Calu3 (cell line): ENCODE measurements at regions of chr6 and their contacts with region 1.

Region 1: GRCh38 chr6:137094411-137095008 is 49.7 kb upstream of the IL20RA start:
- DNase-seq: peak; percentile 44
- H3K4me3 Mint-ChIP-seq: no peak overlapping the region
- H3K27ac Mint-ChIP-seq: no peak overlapping the region
- H3K4me1 Mint-ChIP-seq: no peaks in the 10 kb centered on the region
- H3K27me3 Mint-ChIP-seq: no peaks in the 10 kb centered on the region
- CTCF ChIP-seq: peak; percentile 31

Region 2: GRCh38 chr6:137165375-137166246 is 71.1 kb after region 1 on chr6:
- CTCF ChIA-PET with region 1: interaction called, 10 read pairs
- intact Hi-C with region 1: no loop called
- DNase-seq: peak; percentile 9
- H3K4me3 Mint-ChIP-seq: no peak overlapping the region
- H3K27ac Mint-ChIP-seq: no peak overlapping the region
- H3K4me1 Mint-ChIP-seq: peaks cover 9% of the 10 kb centered on the region
- H3K27me3 Mint-ChIP-seq: peaks cover 13% of the 10 kb centered on the region
- CTCF ChIP-seq: peak; percentile 10

Region 3: DNA sequence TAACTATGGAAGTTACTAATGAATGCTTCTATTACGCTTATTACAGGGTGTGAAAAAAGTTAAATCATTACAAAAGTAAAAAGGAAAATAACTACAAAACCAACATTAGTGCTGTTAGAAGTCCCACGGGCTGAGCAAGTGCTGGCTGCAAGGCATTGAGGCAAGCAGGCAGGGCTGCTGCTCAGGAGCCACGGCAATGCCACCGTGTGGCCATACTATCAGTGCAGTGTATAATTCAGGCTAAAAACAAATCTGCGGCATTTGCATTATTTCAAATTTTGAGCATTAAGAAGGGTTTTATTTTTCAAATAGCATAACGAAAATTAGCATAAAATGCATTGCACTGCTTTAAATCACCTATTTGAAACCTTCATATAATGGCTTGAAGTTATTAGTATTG is 107.6 kb after region 1 on chr6:
- CTCF ChIA-PET with region 1: no interaction called
- intact Hi-C with region 1: no loop called
- DNase-seq: no peak
- H3K4me3 Mint-ChIP-seq: no peak overlapping the region
- H3K27ac Mint-ChIP-seq: no peak overlapping the region
- H3K4me1 Mint-ChIP-seq: no peaks in the 10 kb centered on the region
- H3K27me3 Mint-ChIP-seq: no peaks in the 10 kb centered on the region
- CTCF ChIP-seq: no peak

Region 4: GRCh38 chr6:137313928-137314855 is 219.7 kb after region 1 on chr6:
- CTCF ChIA-PET with region 1: interaction called, 6 read pairs
- intact Hi-C with region 1: loop called (anchors 1 kb)
- DNase-seq: peak; percentile 37
- H3K4me3 Mint-ChIP-seq: no peak overlapping the region
- H3K27ac Mint-ChIP-seq: no peak overlapping the region
- H3K4me1 Mint-ChIP-seq: peaks cover 11% of the 10 kb centered on the region
- H3K27me3 Mint-ChIP-seq: no peaks in the 10 kb centered on the region
- CTCF ChIP-seq: peak; percentile 33

Region 5: GRCh38 chr6:137415127-137415833 is 320.8 kb after region 1 on chr6:
- CTCF ChIA-PET with region 1: no interaction called
- intact Hi-C with region 1: loop called (anchors 10 kb)
- DNase-seq: peak; percentile 61
- H3K4me3 Mint-ChIP-seq: peak overlapping the region; percentile 71
- H3K27ac Mint-ChIP-seq: peak overlapping the region; percentile 59
- H3K4me1 Mint-ChIP-seq: no peaks in the 10 kb centered on the region
- H3K27me3 Mint-ChIP-seq: peaks cover 50% of the 10 kb centered on the region
- CTCF ChIP-seq: peak; percentile 50

Region 6: GRCh38 chr6:137641474-137642077 is 547.1 kb after region 1 on chr6:
- CTCF ChIA-PET with region 1: interaction called, 3 read pairs
- intact Hi-C with region 1: loop called (anchors 1 kb)
- DNase-seq: peak; percentile 53
- H3K4me3 Mint-ChIP-seq: no peak overlapping the region
- H3K27ac Mint-ChIP-seq: no peak overlapping the region
- H3K4me1 Mint-ChIP-seq: peaks cover 5% of the 10 kb centered on the region
- H3K27me3 Mint-ChIP-seq: no peaks in the 10 kb centered on the region
- CTCF ChIP-seq: no peak